CD8-positive, alpha-beta T cell (primary cell): ENCODE measurements at regions of chr6 and their contacts with region 1.

Region 1: GRCh38 chr6:47413752-47414422 is 63.7 kb upstream of the CD2AP start:
- DNase-seq: peak in 7 of 9 experiments; percentile 19 to 78 (median 37)
- ATAC-seq: peak; percentile 79
- H3K4me3 ChIP-seq: peak overlapping the region; percentile 38 to 48
- H3K4me3 Mint-ChIP-seq: peak overlapping the region; percentile 88
- H3K27ac ChIP-seq: peak overlapping the region in 1 of 2 experiments; percentile 31
- H3K27ac Mint-ChIP-seq: peak overlapping the region; percentile 92
- H3K4me1 ChIP-seq: peaks cover 10% of the 10 kb centered on the region
- H3K4me1 Mint-ChIP-seq: peaks cover 17% of the 10 kb centered on the region
- H3K27me3 ChIP-seq: no peaks in the 10 kb centered on the region
- H3K27me3 Mint-ChIP-seq: no peaks in the 10 kb centered on the region
- CTCF ChIP-seq: peak; percentile 87

Region 2: DNA sequence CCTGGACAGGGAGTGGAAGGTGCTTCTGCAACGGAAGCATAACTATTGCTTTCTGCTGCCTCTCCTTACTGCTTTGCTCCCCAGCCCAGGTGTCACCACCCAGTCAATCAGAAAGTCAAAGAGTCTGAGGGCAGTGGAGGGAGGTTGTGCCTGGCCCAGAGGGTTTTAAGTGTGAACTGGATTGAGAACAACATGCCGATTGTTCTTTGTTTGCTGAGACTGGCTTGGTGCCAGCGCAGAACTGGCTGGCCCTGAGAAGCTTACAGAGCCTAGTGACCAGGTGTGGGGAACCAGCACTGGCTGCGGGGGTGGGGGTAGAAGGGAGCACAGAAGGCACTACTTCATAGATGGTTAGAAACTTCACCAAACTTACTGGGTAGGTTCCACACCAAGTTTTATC is 1315.2 kb before region 1 on chr6:
- CTCF ChIA-PET with region 1: no interaction called
- POLR2A ChIA-PET with region 1: no interaction called
- intact Hi-C with region 1: no loop called
- DNase-seq: no peak
- ATAC-seq: no peak
- H3K4me3 ChIP-seq: no peak overlapping the region
- H3K4me3 Mint-ChIP-seq: no peak overlapping the region
- H3K27ac ChIP-seq: no peak overlapping the region
- H3K27ac Mint-ChIP-seq: no peak overlapping the region
- H3K4me1 ChIP-seq: peaks cover 3% of the 10 kb centered on the region
- H3K4me1 Mint-ChIP-seq: peaks cover 4% of the 10 kb centered on the region
- H3K27me3 ChIP-seq: no peaks in the 10 kb centered on the region
- H3K27me3 Mint-ChIP-seq: no peaks in the 10 kb centered on the region
- CTCF ChIP-seq: no peak

Region 3: DNA sequence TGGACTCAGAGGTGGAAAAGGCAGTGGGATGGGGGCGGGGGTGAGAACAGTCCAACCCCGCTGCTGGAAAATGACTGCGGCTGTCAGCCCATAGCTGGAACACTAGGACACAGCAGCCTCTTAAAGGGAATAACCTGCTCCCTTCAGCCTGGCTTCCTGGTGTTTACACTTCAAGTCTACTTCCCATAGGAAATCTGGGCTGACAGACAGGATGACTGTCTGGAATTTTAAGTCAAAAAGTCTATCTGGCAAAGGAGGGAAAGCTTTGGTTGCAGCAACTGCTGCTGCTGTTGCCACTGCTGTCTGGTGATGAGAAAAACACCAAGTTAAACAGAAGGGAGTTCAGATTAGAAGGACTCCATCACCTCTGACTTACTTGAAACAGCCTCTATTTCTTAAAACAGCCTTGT is 149.1 kb before region 1 on chr6:
- CTCF ChIA-PET with region 1: no interaction called
- POLR2A ChIA-PET with region 1: no interaction called
- intact Hi-C with region 1: no loop called
- DNase-seq: no peak
- ATAC-seq: no peak
- H3K4me3 ChIP-seq: no peak overlapping the region
- H3K4me3 Mint-ChIP-seq: no peak overlapping the region
- H3K27ac ChIP-seq: no peak overlapping the region
- H3K27ac Mint-ChIP-seq: no peak overlapping the region
- H3K4me1 ChIP-seq: no peaks in the 10 kb centered on the region
- H3K4me1 Mint-ChIP-seq: no peaks in the 10 kb centered on the region
- H3K27me3 ChIP-seq: no peaks in the 10 kb centered on the region
- H3K27me3 Mint-ChIP-seq: peaks cover 4% of the 10 kb centered on the region
- CTCF ChIP-seq: no peak

Region 4: GRCh38 chr6:47571488-47571887 is 157.6 kb after region 1 on chr6:
- CTCF ChIA-PET with region 1: no interaction called
- POLR2A ChIA-PET with region 1: no interaction called
- intact Hi-C with region 1: loop called in 1 of 2 experiments (anchors 5 kb)
- DNase-seq: no peak
- ATAC-seq: no peak
- H3K4me3 ChIP-seq: no peak overlapping the region
- H3K4me3 Mint-ChIP-seq: no peak overlapping the region
- H3K27ac ChIP-seq: no peak overlapping the region
- H3K27ac Mint-ChIP-seq: no peak overlapping the region
- H3K4me1 ChIP-seq: peaks cover 5% of the 10 kb centered on the region
- H3K4me1 Mint-ChIP-seq: peaks cover 8% of the 10 kb centered on the region
- H3K27me3 ChIP-seq: no peaks in the 10 kb centered on the region
- H3K27me3 Mint-ChIP-seq: no peaks in the 10 kb centered on the region
- CTCF ChIP-seq: no peak

Region 5: GRCh38 chr6:47603995-47604394 is 190.1 kb after region 1 on chr6:
- CTCF ChIA-PET with region 1: no interaction called
- POLR2A ChIA-PET with region 1: no interaction called
- intact Hi-C with region 1: loop called in 1 of 2 experiments (anchors 10 kb)
- DNase-seq: no peak
- ATAC-seq: no peak
- H3K4me3 ChIP-seq: no peak overlapping the region
- H3K4me3 Mint-ChIP-seq: no peak overlapping the region
- H3K27ac ChIP-seq: no peak overlapping the region
- H3K27ac Mint-ChIP-seq: no peak overlapping the region
- H3K4me1 ChIP-seq: no peaks in the 10 kb centered on the region
- H3K4me1 Mint-ChIP-seq: no peaks in the 10 kb centered on the region
- H3K27me3 ChIP-seq: no peaks in the 10 kb centered on the region
- H3K27me3 Mint-ChIP-seq: no peaks in the 10 kb centered on the region
- CTCF ChIP-seq: no peak

Region 6: GRCh38 chr6:47733879-47734558 is 320.1 kb after region 1 on chr6:
- CTCF ChIA-PET with region 1: interaction called, 8 read pairs
- POLR2A ChIA-PET with region 1: no interaction called
- intact Hi-C with region 1: loop called (anchors 1 to 2 kb)
- DNase-seq: peak in 2 of 9 experiments; percentile 12 to 42
- ATAC-seq: no peak
- H3K4me3 ChIP-seq: no peak overlapping the region
- H3K4me3 Mint-ChIP-seq: no peak overlapping the region
- H3K27ac ChIP-seq: no peak overlapping the region
- H3K27ac Mint-ChIP-seq: no peak overlapping the region
- H3K4me1 ChIP-seq: no peaks in the 10 kb centered on the region
- H3K4me1 Mint-ChIP-seq: peaks cover 6% of the 10 kb centered on the region
- H3K27me3 ChIP-seq: no peaks in the 10 kb centered on the region
- H3K27me3 Mint-ChIP-seq: peaks cover 3% of the 10 kb centered on the region
- CTCF ChIP-seq: peak; percentile 19

Region 7: GRCh38 chr6:47787620-47788497 is 374.0 kb after region 1 on chr6:
- CTCF ChIA-PET with region 1: interaction called, 47 read pairs
- POLR2A ChIA-PET with region 1: interaction called, 3 read pairs
- intact Hi-C with region 1: loop called in 1 of 2 experiments (anchors 2 kb)
- DNase-seq: peak; percentile 6 to 64 (median 42)
- ATAC-seq: peak; percentile 83
- H3K4me3 ChIP-seq: no peak overlapping the region
- H3K4me3 Mint-ChIP-seq: no peak overlapping the region
- H3K27ac ChIP-seq: no peak overlapping the region
- H3K27ac Mint-ChIP-seq: no peak overlapping the region
- H3K4me1 ChIP-seq: peaks cover 3% of the 10 kb centered on the region
- H3K4me1 Mint-ChIP-seq: peaks cover 6% of the 10 kb centered on the region
- H3K27me3 ChIP-seq: peaks cover 0 to 8% of the 10 kb centered on the region in 2 experiments
- H3K27me3 Mint-ChIP-seq: peaks cover 34% of the 10 kb centered on the region
- CTCF ChIP-seq: peak; percentile 91